Heart right ventricle (tissue), 16 donors: ENCODE measurements at regions of chr16 and their contacts with region 1.

Region 1: DNA sequence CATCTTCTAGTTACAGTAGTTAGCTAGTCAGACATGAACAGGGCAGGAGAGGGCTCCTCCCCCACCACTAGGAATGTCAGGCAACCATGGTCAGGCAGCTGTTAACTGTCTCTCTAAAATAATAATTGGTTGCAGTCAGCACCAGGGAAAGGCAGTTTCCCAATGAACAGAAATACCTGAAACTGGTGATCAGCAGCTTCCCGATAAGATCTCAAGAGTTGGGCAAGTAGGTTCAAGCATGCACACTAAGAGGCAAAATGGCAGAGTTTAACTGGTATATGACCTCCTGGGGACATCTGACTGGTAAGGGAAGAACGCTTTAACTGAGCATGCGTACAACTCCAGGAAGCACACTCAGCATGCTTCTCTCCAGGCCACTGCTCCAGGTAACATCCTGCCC is 12.6 kb upstream of the XYLT1 start:
- DNase-seq: no peak
- ATAC-seq: no peak
- H3K4me3 ChIP-seq: no peak overlapping the region
- H3K27ac ChIP-seq: no peak overlapping the region
- H3K4me1 ChIP-seq: no peaks in the 10 kb centered on the region
- H3K27me3 ChIP-seq: peaks cover 0 to 55% (median 39%) of the 10 kb centered on the region in 7 donors
- CTCF ChIP-seq: no peak

Region 2: GRCh38 chr16:17578921-17579874 is 95.8 kb after region 1 on chr16:
- intact Hi-C with region 1: loop called in 4 of 10 experiments (anchors 5 to 10 kb)
- DNase-seq: peak in 1 of 2 donors; percentile 58
- ATAC-seq: peak in 7 of 8 donors; percentile 45 to 83 (median 71)
- H3K4me3 ChIP-seq: no peak overlapping the region
- H3K27ac ChIP-seq: no peak overlapping the region
- H3K4me1 ChIP-seq: peaks cover 0 to 10% (median 0%) of the 10 kb centered on the region in 9 donors
- H3K27me3 ChIP-seq: peaks cover 0 to 5% (median 0%) of the 10 kb centered on the region in 7 donors
- CTCF ChIP-seq: peak; percentile 60 to 89 (median 83)